ENCODE measurements at regions of chrX and their contacts with region 1.

Region 1: DNA sequence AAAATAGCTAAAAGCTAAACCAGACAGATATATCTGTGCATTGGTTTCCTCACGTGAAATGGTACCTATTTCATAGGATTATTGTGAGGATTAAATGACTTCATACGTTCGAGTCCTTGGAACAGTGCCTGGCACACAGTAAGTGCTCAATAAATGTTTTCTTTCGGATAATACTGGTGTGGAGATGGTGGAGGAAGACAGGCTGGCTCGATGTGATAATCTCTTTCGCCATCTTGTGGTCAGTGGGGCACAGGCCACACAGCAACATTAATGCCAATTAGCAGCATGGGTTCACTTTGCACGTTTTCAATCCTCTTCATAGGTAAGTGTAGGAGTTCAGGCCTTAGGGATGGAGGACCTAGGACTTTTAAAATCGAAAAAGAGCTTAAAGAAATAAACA is 9.3 kb downstream of the PAGE4 start:
- DNase-seq: peak; percentile 35
- ATAC-seq: peak; percentile 82
- H3K4me3 ChIP-seq: no peak overlapping the region
- H3K27ac ChIP-seq: no peak overlapping the region
- H3K4me1 ChIP-seq: no peaks in the 10 kb centered on the region
- H3K27me3 ChIP-seq: peaks cover 20% of the 10 kb centered on the region
- CTCF ChIP-seq: peak; percentile 67

Region 2: DNA sequence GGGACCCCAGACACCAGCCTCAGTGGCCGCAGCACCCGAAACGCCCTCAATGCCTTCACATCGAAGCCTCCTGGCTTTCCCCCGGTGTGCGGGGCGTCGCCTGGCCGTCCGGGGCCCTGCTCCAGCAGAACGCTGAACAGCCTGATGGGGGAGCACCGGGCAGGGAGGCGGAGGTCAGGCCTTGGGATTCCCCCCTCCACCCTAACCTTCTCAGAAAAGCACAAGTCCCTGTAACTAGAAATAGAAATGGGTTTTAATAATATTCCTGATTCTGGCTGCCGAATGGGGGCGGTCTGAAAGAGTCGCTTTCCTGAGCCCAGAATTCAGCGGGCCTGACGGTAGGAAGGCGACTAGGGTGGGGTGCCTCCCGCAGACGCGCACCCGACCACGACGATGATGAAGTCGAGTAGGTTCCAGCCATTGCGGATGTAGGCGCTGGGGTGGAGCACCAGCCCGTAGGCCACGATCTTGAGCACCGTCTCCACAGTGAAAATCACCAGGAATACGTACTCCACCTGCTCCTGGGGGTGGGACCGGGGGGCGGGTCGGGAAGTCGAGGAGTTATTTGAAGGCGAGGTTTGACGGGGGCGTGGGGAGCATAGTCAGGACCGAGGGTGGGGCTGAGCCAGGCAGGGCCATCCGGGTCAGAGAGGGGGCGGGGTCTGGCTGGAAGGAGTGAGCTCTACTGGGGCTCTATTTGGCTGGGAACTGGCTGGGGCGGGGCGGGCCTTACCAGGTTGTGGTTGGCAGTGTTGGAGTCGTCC is 607.7 kb before region 1 on chrX:
- CTCF ChIA-PET with region 1: no interaction called
- POLR2A ChIA-PET with region 1: no interaction called
- intact Hi-C with region 1: no loop called
- DNase-seq: no peak
- ATAC-seq: no peak
- H3K4me3 ChIP-seq: no peak overlapping the region
- H3K27ac ChIP-seq: no peak overlapping the region
- H3K4me1 ChIP-seq: no peaks in the 10 kb centered on the region
- H3K27me3 ChIP-seq: no peaks in the 10 kb centered on the region
- CTCF ChIP-seq: no peak

Region 3: GRCh38 chrX:49761481-49761880 is 76.9 kb before region 1 on chrX:
- CTCF ChIA-PET with region 1: no interaction called
- POLR2A ChIA-PET with region 1: no interaction called
- intact Hi-C with region 1: loop called (anchors 5 kb)
- DNase-seq: peak; percentile 27
- ATAC-seq: no peak
- H3K4me3 ChIP-seq: no peak overlapping the region
- H3K27ac ChIP-seq: no peak overlapping the region
- H3K4me1 ChIP-seq: no peaks in the 10 kb centered on the region
- H3K27me3 ChIP-seq: 0 out of 2 replicates have a peak, but pooled peaks cover 14% of the 10 kb centered on the region
- CTCF ChIP-seq: peak; percentile 60

Region 4: GRCh38 chrX:49901048-49901447 is 62.7 kb after region 1 on chrX:
- CTCF ChIA-PET with region 1: no interaction called
- POLR2A ChIA-PET with region 1: no interaction called
- intact Hi-C with region 1: no loop called
- DNase-seq: no peak
- ATAC-seq: no peak
- H3K4me3 ChIP-seq: no peak overlapping the region
- H3K27ac ChIP-seq: no peak overlapping the region
- H3K4me1 ChIP-seq: no peaks in the 10 kb centered on the region
- H3K27me3 ChIP-seq: peaks cover 18% of the 10 kb centered on the region
- CTCF ChIP-seq: no peak